Endothelial cell of umbilical vein (primary cell): ENCODE measurements at regions of chr10 and their contacts with region 1.

Region 1: DNA sequence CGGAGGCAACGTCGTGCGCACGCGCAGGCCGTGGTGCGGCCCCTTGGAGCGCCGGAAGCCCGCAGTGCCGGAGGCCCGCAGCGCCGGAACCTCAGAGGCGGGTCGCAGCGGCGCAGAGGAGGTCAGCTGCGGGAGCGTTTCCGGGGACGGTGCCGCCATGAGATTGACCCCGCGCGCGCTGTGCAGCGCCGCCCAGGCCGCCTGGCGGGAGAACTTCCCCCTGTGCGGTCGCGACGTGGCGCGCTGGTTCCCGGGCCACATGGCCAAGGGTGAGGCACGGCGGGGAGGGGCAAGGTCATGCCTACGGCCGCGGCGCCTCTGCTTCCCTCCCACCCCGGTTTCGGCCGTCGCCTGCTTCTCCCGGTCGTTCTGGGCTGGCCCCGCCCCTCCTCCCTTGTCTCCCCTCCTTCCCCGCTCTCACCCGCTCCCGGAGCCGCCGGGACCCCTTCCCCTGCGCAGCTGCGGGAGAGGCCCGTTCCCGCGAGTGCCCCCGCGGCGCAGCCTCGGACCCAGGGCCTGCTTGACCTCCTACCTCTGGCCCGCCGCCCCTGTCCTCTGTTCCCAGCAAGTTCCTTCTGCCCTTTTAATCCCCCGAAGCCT is at the start of gene MTG1:
- DNase-seq: peak; percentile 90
- H3K4me3 ChIP-seq: peak within 1 kb of the TSS; percentile 46 to 83 (median 69)
- H3K27ac ChIP-seq: peak within 1 kb of the TSS; percentile 12
- H3K4me1 ChIP-seq: peaks cover 9% of the 10 kb centered on the region
- H3K27me3 ChIP-seq: no peaks in the 10 kb centered on the region
- CTCF ChIP-seq: peak in 1 of 2 donors; percentile 9
- POLR2A ChIP-seq: peak; percentile 84
- total RNA-seq, gene MTG1: 60.2 and 66.5 TPM in 2 replicates

Region 2: DNA sequence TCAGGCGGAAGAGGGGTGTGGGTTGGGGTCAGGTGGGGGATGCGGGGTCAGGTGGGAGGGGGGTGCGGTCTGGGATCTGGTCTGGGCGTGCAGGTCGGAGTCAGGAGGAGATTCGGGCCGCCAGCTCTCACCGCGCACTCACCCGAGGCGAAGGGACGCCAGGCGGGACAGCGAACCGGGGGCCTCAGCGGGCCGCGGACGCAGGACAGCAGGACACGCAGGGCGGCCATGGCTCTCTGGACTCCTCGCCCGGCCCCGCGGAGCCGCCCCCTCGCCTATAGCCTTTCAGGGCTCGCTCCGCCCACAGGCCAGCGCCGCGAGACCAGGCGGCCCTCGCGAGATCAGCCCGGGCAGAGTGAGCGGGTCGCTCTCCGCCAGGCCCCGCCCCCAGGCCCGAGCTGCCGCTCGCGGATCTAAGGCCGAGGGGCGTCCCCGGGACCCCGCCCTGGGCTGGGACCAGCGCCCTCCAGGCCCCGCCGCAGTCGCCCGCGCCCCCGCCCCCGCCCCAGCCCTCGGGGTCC is 21.0 kb before region 1 on chr10 and contains the start of gene ECHS1:
- CTCF ChIA-PET with region 1: no interaction called
- POLR2A ChIA-PET with region 1: no interaction called
- dilution Hi-C with region 1: no loop called
- intact Hi-C with region 1: loop called (anchors 1 kb)
- DNase-seq: peak; percentile 93
- H3K4me3 ChIP-seq: peak within 1 kb of the TSS; percentile 53 to 100 (median 69)
- H3K27ac ChIP-seq: peak within 1 kb of the TSS; percentile 74
- H3K4me1 ChIP-seq: peaks cover 9% of the 10 kb centered on the region
- H3K27me3 ChIP-seq: no peaks in the 10 kb centered on the region
- CTCF ChIP-seq: no peak
- POLR2A ChIP-seq: peak; percentile 91
- total RNA-seq, gene ECHS1: 91.9 and 108 TPM in 2 replicates

Region 3: DNA sequence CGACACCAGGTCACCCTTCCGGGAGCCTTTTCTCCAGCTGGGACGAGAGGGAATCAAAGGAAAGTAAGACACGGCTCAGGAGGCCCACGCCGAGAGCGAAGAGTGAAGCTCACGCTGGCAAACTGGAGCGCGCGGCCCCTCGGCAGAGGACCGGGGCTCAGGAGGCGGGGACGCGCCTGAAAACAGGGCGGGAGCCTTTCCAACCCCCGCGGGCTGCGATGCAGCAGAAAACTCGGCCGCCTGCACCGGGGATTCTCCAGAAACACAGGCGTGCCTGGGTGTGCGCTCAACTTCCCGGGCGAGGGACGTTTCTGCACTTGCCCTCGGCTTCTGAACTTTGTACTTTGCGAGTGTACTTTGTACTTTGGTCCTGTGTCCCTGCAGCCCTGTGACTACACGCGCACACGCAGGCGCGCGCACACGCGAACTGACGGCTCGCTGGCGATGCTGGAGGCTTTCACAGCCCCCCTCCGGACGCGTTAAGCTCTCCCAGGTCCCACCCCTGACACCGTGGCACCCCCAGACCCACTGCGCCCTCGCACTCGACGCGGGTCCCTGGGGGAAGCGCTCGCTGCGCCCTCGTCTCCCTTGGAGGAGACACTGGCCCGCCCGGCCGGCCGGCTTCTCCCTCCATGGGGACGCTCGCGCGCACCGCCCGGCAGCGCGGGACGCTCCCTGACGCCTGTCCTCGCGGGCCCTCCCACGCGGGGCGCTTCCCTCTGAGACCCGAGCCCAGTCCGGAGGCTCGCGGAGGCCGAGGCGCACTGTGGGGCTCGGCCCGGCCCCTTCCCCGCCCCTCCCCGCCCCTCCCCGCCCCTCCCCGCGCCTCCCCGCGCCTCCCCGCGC is 15.7 kb before region 1 on chr10:
- CTCF ChIA-PET with region 1: interaction called, 9 read pairs
- POLR2A ChIA-PET with region 1: no interaction called
- dilution Hi-C with region 1: no loop called
- intact Hi-C with region 1: loop called (anchors 1 kb)
- DNase-seq: peak; percentile 54
- H3K4me3 ChIP-seq: peak overlapping the region; percentile 23 to 57 (median 53)
- H3K27ac ChIP-seq: no peak overlapping the region
- H3K4me1 ChIP-seq: peaks cover 14% of the 10 kb centered on the region
- H3K27me3 ChIP-seq: no peaks in the 10 kb centered on the region
- CTCF ChIP-seq: no peak
- POLR2A ChIP-seq: no peak